ENCODE measurements at regions of chr4 and their contacts with region 1.

Region 1: GRCh38 chr4:24472514-24473308 is 111.6 kb downstream of the DHX15 start:
- DNase-seq: peak; percentile 86
- ATAC-seq: peak; percentile 66
- H3K4me3 Mint-ChIP-seq: peak overlapping the region; percentile 97
- H3K27ac Mint-ChIP-seq: peak overlapping the region; percentile 80
- H3K4me1 Mint-ChIP-seq: peaks cover 67% of the 10 kb centered on the region
- H3K27me3 Mint-ChIP-seq: peaks cover 35% of the 10 kb centered on the region
- CTCF ChIP-seq: peak; percentile 79

Region 2: DNA sequence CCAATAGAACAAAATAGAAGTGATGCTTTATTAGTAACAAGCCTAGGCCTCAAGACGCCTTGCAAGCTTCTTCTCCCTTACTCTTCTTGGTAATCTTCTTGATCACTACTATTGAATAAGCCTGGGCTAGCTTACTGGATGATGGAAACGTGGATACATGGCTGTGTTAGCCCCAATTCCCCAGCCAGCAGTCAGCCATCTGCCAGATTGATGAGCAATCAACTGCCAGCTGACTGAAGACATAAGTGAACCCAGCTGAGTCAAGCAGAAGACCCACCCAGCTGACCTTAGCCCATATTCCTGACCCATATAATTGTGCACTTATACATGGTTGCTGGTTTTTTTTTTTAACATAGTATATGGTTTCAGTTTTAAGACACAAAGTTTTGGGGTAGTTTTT is 18.8 kb before region 1 on chr4:
- CTCF ChIA-PET with region 1: no interaction called
- POLR2A ChIA-PET with region 1: no interaction called
- DNase-seq: no peak
- ATAC-seq: no peak
- H3K4me3 Mint-ChIP-seq: no peak overlapping the region
- H3K27ac Mint-ChIP-seq: no peak overlapping the region
- H3K4me1 Mint-ChIP-seq: peaks cover 7% of the 10 kb centered on the region
- H3K27me3 Mint-ChIP-seq: no peaks in the 10 kb centered on the region; the same call in 1 of the 2 replicates
- CTCF ChIP-seq: no peak

Region 3: GRCh38 chr4:24488399-24489164 is 15.9 kb after region 1 on chr4:
- CTCF ChIA-PET with region 1: interaction called, 34 read pairs
- POLR2A ChIA-PET with region 1: no interaction called
- DNase-seq: peak; percentile 94
- ATAC-seq: peak; percentile 97
- H3K4me3 Mint-ChIP-seq: no peak overlapping the region
- H3K27ac Mint-ChIP-seq: no peak overlapping the region
- H3K4me1 Mint-ChIP-seq: peaks cover 18% of the 10 kb centered on the region
- H3K27me3 Mint-ChIP-seq: no peaks in the 10 kb centered on the region
- CTCF ChIP-seq: peak; percentile 88

Region 4: GRCh38 chr4:24497221-24497620 is 24.5 kb after region 1 on chr4:
- CTCF ChIA-PET with region 1: interaction called, 12 read pairs
- POLR2A ChIA-PET with region 1: interaction called, 4 read pairs
- DNase-seq: no peak
- ATAC-seq: no peak
- H3K4me3 Mint-ChIP-seq: no peak overlapping the region
- H3K27ac Mint-ChIP-seq: no peak overlapping the region
- H3K4me1 Mint-ChIP-seq: peaks cover 49% of the 10 kb centered on the region
- H3K27me3 Mint-ChIP-seq: no peaks in the 10 kb centered on the region
- CTCF ChIP-seq: no peak

Region 5: GRCh38 chr4:24514803-24515202 is 42.1 kb after region 1 on chr4:
- CTCF ChIA-PET with region 1: interaction called, 11 read pairs
- POLR2A ChIA-PET with region 1: interaction called, 3 read pairs
- DNase-seq: no peak
- ATAC-seq: no peak
- H3K4me3 Mint-ChIP-seq: no peak overlapping the region
- H3K27ac Mint-ChIP-seq: peak overlapping the region; percentile 60; the same call in 1 of the 2 replicates
- H3K4me1 Mint-ChIP-seq: peaks cover 72% of the 10 kb centered on the region
- H3K27me3 Mint-ChIP-seq: no peaks in the 10 kb centered on the region
- CTCF ChIP-seq: no peak

Region 6: DNA sequence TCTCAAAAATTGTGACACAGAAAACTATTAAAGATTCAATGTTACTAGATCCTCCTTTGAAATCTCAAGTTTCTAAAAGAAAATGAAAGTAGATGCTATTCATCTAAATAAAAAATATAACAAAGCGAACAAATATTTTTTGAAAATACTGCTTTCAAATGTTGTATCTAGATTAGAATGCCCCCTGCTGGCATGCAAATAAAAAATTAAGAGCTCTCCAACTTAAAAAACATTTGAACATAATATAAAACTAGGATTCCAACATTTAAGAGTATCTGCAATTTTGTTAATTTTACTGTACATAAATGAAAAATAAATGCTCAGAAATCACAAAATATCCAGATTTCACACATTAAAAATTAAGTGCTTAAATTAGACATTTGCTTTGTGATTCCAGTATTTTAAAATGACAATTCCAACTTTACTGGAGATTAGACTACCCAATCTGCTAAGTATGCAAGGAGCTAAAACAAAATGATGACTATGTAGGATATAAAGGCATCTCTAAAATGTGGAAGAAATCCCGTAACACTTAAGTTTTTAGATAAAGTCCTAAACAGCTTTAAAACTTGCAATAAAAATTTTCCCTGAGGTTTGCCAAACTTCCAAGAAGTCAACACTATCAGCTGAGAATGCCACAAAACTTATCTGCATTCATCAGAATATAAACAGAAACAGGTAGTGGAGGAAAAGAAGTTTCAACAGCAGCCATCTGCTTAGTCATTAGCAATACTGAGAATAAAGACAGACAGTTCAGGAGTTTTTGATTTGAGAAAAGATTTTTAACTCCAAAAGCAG is 79.0 kb after region 1 on chr4:
- CTCF ChIA-PET with region 1: interaction called, 11 read pairs
- POLR2A ChIA-PET with region 1: no interaction called
- DNase-seq: no peak
- ATAC-seq: no peak
- H3K4me3 Mint-ChIP-seq: peak overlapping the region; percentile 8; the same call in 1 of the 2 replicates
- H3K27ac Mint-ChIP-seq: peak overlapping the region; percentile 86
- H3K4me1 Mint-ChIP-seq: peaks cover 67% of the 10 kb centered on the region
- H3K27me3 Mint-ChIP-seq: no peaks in the 10 kb centered on the region
- CTCF ChIP-seq: no peak

Measured in WTC11 (cell line).